ENCODE measurements at regions of chr12 and their contacts with region 1.

Region 1: GRCh38 chr12:42129595-42130204 is 15.0 kb downstream of the GXYLT1 start:
- DNase-seq: peak; percentile 83
- H3K4me3 ChIP-seq: peak overlapping the region; percentile 71; the same call in 1 of the 2 replicates
- H3K27ac ChIP-seq: peak overlapping the region; percentile 89
- H3K4me1 ChIP-seq: peaks cover 22% of the 10 kb centered on the region
- H3K27me3 ChIP-seq: no peaks in the 10 kb centered on the region

Region 2: GRCh38 chr12:42325653-42326474 is 196.2 kb after region 1 on chr12 and contains the starts of genes PPHLN1 and ZCRB1:
- in situ Hi-C with region 1: loop called (anchors 5 kb)
- DNase-seq: peak; percentile 93
- H3K4me3 ChIP-seq: peak within 1 kb of the TSS; percentile 93
- H3K27ac ChIP-seq: peak within 1 kb of the TSS; percentile 71
- H3K4me1 ChIP-seq: peaks cover 12% of the 10 kb centered on the region
- H3K27me3 ChIP-seq: no peaks in the 10 kb centered on the region
- total RNA-seq, gene PPHLN1: 55.3 and 77.3 TPM in 2 replicates
- total RNA-seq, gene ZCRB1: 20.6 and 26.8 TPM in 2 replicates